ENCODE measurements at regions of chr11 and their contacts with region 1.

Region 1: DNA sequence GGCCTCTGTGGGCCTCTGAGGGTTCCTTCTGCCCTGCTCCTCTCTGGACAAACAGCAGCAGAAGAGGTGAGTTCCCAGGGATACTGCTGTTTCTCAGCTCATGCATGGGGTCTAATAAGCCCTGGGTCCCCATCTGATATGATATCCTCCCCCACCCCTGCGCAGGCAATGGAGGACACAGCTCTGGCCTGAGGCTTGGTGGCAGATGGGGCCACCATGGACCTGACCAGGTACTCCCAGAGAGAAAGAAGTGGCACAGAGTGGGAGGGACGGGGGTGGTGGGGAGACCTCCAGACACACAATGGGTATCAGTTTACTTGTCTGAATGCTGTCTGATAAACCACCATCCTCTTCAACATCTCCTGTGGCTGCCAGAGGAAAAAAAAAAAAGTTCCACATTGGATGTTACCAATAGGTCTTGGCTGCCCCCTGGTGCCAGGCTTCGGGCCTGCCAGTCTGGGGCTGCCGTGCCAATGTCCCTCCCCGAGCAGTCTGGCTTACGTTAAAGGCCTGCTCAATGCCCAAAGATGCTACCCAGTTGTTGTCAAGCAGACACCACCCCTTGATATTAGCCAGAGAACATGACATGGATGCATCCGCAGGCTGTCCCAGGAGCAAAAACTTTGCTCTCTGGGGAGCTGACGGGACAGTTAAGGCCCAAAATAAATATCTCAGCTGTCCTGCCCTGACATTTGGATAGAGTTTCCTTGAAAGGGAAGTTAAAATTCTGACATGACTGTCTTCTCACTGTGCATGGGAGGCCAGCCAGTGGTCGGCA is 27.9 kb upstream of the ABCC8 start:
- DNase-seq: peak; percentile 88 to 90
- H3K4me3 ChIP-seq: no peak overlapping the region
- H3K27ac ChIP-seq: no peak overlapping the region
- H3K4me1 ChIP-seq: no peaks in the 10 kb centered on the region
- H3K27me3 ChIP-seq: peaks cover 0 to 4% (median 0%) of the 10 kb centered on the region in 3 donors
- CTCF ChIP-seq: peak in 5 of 7 experiments; percentile 79 to 94 (median 88)
- EP300 ChIP-seq: no peak
- POLR2A ChIP-seq: no peak

Region 2: GRCh38 chr11:17230867-17231851 is 273.4 kb before region 1 on chr11:
- intact Hi-C with region 1: loop called (anchors 10 kb)
- DNase-seq: peak in 1 of 2 donors; percentile 14
- H3K4me3 ChIP-seq: no peak overlapping the region
- H3K27ac ChIP-seq: no peak overlapping the region
- H3K4me1 ChIP-seq: peaks cover 0 to 11% (median 0%) of the 10 kb centered on the region in 4 donors
- H3K27me3 ChIP-seq: no peaks in the 10 kb centered on the region
- CTCF ChIP-seq: no peak
- EP300 ChIP-seq: no peak
- POLR2A ChIP-seq: no peak

Region 3: DNA sequence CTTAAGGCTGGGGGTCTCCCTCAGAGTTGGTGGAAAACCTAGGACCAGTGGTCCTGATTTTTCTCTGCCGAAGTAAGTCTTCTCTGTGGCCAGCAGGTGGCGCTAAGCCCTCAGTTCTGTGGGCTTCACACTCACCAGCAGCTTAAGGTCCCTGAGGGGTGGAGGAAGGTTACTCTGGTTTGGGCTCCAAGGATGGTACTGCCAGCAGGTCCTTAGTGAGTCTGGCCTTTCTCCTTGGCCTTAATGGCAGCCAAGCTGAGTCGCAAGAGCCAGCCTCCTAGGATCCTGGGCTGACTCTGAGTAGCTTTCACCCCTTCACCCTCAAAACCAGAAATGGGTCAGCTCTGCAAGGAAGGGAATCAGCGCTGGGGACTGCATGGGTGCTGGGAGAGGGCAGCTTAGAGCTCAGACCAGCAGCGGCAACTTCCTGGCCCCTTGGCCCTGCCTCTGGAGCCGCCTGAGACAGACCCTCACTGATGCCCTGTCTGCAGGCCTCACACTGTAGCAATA is 120.5 kb before region 1 on chr11:
- intact Hi-C with region 1: loop called (anchors 2 kb)
- DNase-seq: peak; percentile 84 to 95
- H3K4me3 ChIP-seq: no peak overlapping the region
- H3K27ac ChIP-seq: no peak overlapping the region
- H3K4me1 ChIP-seq: peaks cover 0 to 27% (median 9%) of the 10 kb centered on the region in 4 donors
- H3K27me3 ChIP-seq: peaks cover 0 to 15% (median 0%) of the 10 kb centered on the region in 3 donors
- CTCF ChIP-seq: peak in 5 of 7 experiments; percentile 80 to 93 (median 87)
- EP300 ChIP-seq: no peak
- POLR2A ChIP-seq: no peak

Region 4: GRCh38 chr11:17563248-17563647 is 58.7 kb after region 1 on chr11:
- intact Hi-C with region 1: no loop called
- DNase-seq: peak in 1 of 2 donors; percentile 22
- H3K4me3 ChIP-seq: no peak overlapping the region
- H3K27ac ChIP-seq: no peak overlapping the region
- H3K4me1 ChIP-seq: no peaks in the 10 kb centered on the region
- H3K27me3 ChIP-seq: no peaks in the 10 kb centered on the region
- CTCF ChIP-seq: no peak
- EP300 ChIP-seq: no peak
- POLR2A ChIP-seq: no peak

Measured in stomach (tissue), 19 donors.